ENCODE measurements at regions of chr20 and their contacts with region 1.

Region 1: GRCh38 chr20:59751056-59751688 is 146.8 kb downstream of the PHACTR3 start:
- DNase-seq: peak in 1 of 2 experiments; percentile 64
- H3K4me3 ChIP-seq: no peak overlapping the region
- H3K27ac ChIP-seq: no peak overlapping the region
- H3K4me1 ChIP-seq: no peaks in the 10 kb centered on the region
- H3K27me3 ChIP-seq: peaks cover 100% of the 10 kb centered on the region
- CTCF ChIP-seq: peak; percentile 90

Region 2: DNA sequence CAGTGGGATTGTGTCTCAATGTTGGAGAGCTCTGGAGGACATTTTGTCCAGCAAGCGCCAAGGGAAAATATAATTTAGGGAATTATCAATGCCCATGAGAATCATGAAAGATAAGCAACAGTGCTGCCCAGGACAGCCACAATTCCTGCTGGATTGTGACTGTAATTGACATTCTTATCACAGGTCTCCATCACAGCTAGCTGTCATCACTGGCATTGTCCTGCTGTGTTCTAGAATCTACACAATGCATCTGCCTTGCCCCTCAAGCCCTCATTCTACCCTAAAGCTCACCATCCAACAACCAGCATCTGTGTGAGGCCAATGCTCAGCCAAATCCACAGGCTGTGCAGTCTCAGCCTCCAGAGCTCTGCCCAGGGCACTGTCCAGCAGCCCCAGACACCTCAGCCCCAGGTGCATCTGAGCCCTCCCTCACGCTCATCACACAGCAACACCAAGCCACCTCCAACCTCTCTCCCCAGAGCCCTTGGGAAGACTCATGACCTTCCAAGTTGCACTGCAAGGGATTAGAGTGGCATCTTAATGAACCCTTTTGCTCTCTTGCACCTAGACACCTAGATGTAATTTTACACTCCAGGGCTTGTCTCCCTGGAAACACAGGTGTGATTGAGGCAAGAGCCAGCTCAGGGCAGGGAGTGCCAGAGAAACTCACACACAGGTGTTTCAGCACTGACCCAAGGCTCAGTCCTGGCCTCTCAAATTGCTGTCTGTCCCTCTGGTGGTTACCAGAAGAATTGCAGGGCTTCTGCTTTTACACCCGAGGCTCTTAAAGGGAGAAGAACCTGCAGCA is 232.1 kb before region 1 on chr20:
- CTCF ChIA-PET with region 1: no interaction called
- POLR2A ChIA-PET with region 1: no interaction called
- intact Hi-C with region 1: loop called (anchors 5 kb)
- DNase-seq: peak; percentile 18 to 59
- H3K4me3 ChIP-seq: no peak overlapping the region
- H3K27ac ChIP-seq: no peak overlapping the region
- H3K4me1 ChIP-seq: no peaks in the 10 kb centered on the region
- H3K27me3 ChIP-seq: peaks cover 39% of the 10 kb centered on the region; the same call in 1 of the 2 replicates
- CTCF ChIP-seq: peak; percentile 95

Region 3: DNA sequence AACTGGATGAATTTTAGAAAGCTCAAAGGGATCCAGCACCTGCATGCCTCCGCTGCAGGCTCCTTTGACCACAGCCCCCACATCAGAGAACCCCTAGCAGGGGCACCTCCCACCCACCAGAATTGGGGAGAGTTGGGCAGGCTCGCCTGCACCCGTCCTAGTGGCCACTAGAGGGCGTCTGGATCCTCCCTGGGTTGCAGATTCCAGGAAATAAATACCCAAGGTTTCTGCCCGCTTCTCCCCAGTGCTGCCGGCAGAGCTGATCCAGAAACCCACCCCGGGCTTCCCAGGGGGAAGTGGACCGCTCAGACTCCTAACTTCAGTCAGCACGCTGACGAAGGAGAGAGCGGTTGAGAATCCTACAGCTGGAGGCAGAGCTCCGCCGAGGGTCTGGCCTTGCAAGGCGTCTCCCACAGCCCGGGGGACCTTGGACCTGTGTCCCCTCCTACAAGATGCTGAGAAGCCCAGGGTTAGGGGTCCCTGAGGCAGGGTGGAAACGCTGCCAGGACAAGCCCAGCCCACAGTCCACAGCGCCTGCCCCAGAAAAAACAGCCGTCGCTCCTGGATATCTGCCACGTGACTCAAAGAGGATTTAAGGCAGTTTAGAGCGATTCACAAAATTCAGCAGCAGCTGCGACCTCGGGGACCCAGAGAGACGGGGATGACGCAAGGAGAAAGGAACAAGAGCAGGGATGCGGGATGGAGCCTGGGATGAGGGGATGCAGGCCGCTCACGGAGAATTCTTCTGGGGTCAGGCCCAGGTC is 179.4 kb before region 1 on chr20:
- CTCF ChIA-PET with region 1: no interaction called
- POLR2A ChIA-PET with region 1: no interaction called
- intact Hi-C with region 1: loop called (anchors 1 kb)
- DNase-seq: peak in 1 of 2 experiments; percentile 29
- H3K4me3 ChIP-seq: no peak overlapping the region
- H3K27ac ChIP-seq: no peak overlapping the region
- H3K4me1 ChIP-seq: no peaks in the 10 kb centered on the region
- H3K27me3 ChIP-seq: peaks cover 73% of the 10 kb centered on the region
- CTCF ChIP-seq: peak; percentile 97

Region 4: GRCh38 chr20:61166324-61166723 is 1415.2 kb after region 1 on chr20:
- CTCF ChIA-PET with region 1: no interaction called
- POLR2A ChIA-PET with region 1: no interaction called
- intact Hi-C with region 1: no loop called
- DNase-seq: no peak
- H3K4me3 ChIP-seq: no peak overlapping the region
- H3K27ac ChIP-seq: no peak overlapping the region
- H3K4me1 ChIP-seq: no peaks in the 10 kb centered on the region
- H3K27me3 ChIP-seq: peaks cover 59% of the 10 kb centered on the region
- CTCF ChIP-seq: no peak

Measured in PC-9 (cell line).